ENCODE measurements at regions of chr5 and their contacts with region 1.

Region 1: DNA sequence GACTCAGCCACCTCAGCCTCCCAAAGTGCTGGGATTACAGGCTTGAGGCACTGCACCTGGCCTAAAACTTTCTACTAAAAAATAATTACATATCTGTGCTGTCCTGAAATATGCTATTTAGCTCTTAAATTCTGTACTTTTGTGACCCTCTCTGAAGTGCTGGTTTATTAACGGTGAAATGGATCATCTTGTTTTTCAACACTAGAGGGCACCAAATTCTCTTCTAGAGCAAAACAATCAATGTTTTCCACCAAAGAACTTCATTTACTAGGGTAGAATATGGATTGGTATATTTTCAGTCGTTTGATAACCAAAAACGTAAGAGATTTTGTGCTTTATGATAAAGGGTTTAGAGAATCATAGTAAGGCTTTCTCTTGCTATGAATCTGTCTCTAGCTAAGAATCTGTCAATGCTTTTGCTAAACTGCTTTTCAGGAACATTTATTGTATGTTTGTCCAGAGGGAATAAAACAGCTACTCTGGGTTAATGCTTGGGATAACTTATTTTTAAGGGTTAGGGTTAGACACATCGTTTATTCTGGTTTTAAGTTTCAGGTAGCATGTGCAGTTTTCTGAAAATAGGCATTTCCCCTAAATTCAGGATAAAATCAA is 63.6 kb downstream of the RNF180 start:
- DNase-seq: peak; percentile 49
- H3K4me3 ChIP-seq: no peak overlapping the region
- H3K27ac ChIP-seq: no peak overlapping the region
- H3K4me1 ChIP-seq: no peaks in the 10 kb centered on the region
- H3K27me3 ChIP-seq: no peaks in the 10 kb centered on the region
- CTCF ChIP-seq: peak; percentile 24 to 41
- POLR2A ChIP-seq: no peak

Region 2: GRCh38 chr5:64207978-64208377 is 21.3 kb before region 1 on chr5:
- CTCF ChIA-PET with region 1: interaction called, 41 read pairs
- POLR2A ChIA-PET with region 1: no interaction called
- dilution Hi-C with region 1: no loop called
- intact Hi-C with region 1: no loop called
- DNase-seq: peak; percentile 40
- H3K4me3 ChIP-seq: no peak overlapping the region
- H3K27ac ChIP-seq: no peak overlapping the region
- H3K4me1 ChIP-seq: peaks cover 16% of the 10 kb centered on the region
- H3K27me3 ChIP-seq: no peaks in the 10 kb centered on the region
- CTCF ChIP-seq: no peak
- POLR2A ChIP-seq: no peak

Region 3: GRCh38 chr5:64384761-64385160 is 155.5 kb after region 1 on chr5:
- CTCF ChIA-PET with region 1: interaction called, 6 read pairs
- POLR2A ChIA-PET with region 1: no interaction called
- dilution Hi-C with region 1: no loop called
- intact Hi-C with region 1: loop called (anchors 10 kb)
- DNase-seq: peak; percentile 55
- H3K4me3 ChIP-seq: no peak overlapping the region
- H3K27ac ChIP-seq: no peak overlapping the region
- H3K4me1 ChIP-seq: no peaks in the 10 kb centered on the region
- H3K27me3 ChIP-seq: no peaks in the 10 kb centered on the region
- CTCF ChIP-seq: peak; percentile 29 to 41
- POLR2A ChIP-seq: no peak